K562 (cell line): ENCODE measurements at regions of chr12 and their contacts with region 1.

Region 1: GRCh38 chr12:110431957-110432587 is 18.1 kb downstream of the ARPC3 start:
- DNase-seq: no peak
- ATAC-seq: no peak
- H3K4me3 ChIP-seq: no peak overlapping the region
- H3K27ac ChIP-seq: peak overlapping the region; percentile 40; the same call in 1 of the 3 replicates
- H3K4me1 ChIP-seq: peaks cover 0 to 11% of the 10 kb centered on the region in 2 experiments; a peak in 2 of 5 replicates
- H3K27me3 ChIP-seq: no peaks in the 10 kb centered on the region
- CTCF ChIP-seq: no peak
- EP300 ChIP-seq: no peak
- POLR2A ChIP-seq: no peak
- RAD21 ChIP-seq: no peak

Region 2: DNA sequence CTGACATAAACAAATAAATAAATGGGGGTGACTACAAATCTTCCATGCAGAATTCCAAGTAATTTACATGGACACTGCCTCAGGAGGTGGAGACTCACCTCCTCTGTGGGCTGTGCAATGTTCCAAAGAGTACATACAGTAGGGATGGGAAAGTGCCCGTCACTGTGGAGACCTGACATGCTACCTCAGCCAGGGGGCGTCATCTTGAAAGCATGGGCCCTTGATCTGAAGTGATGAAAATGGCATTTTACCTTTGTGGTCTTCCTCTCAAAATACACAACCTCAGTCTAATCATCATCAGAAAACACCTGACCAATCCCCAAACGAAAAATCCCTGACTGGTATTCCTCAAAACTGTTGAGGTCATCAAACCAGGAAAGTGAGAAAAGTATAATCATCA is 77.0 kb before region 1 on chr12:
- CTCF ChIA-PET with region 1: interaction called, 7 read pairs
- POLR2A ChIA-PET with region 1: interaction called, 10 read pairs
- in situ Hi-C with region 1: no loop called
- intact Hi-C with region 1: loop called (anchors 1 kb)
- DNase-seq: peak; percentile 58 to 65 (median 61)
- ATAC-seq: peak; percentile 80
- H3K4me3 ChIP-seq: no peak overlapping the region
- H3K27ac ChIP-seq: no peak overlapping the region
- H3K4me1 ChIP-seq: peaks cover 8 to 21% of the 10 kb centered on the region in 2 experiments; a peak in 4 of 5 replicates
- H3K27me3 ChIP-seq: no peaks in the 10 kb centered on the region
- CTCF ChIP-seq: peak; percentile 61 to 71 (median 66)
- EP300 ChIP-seq: no peak
- POLR2A ChIP-seq: no peak
- RAD21 ChIP-seq: peak in 1 of 2 experiments; percentile 66; a peak in 3 of 4 replicates

Region 3: DNA sequence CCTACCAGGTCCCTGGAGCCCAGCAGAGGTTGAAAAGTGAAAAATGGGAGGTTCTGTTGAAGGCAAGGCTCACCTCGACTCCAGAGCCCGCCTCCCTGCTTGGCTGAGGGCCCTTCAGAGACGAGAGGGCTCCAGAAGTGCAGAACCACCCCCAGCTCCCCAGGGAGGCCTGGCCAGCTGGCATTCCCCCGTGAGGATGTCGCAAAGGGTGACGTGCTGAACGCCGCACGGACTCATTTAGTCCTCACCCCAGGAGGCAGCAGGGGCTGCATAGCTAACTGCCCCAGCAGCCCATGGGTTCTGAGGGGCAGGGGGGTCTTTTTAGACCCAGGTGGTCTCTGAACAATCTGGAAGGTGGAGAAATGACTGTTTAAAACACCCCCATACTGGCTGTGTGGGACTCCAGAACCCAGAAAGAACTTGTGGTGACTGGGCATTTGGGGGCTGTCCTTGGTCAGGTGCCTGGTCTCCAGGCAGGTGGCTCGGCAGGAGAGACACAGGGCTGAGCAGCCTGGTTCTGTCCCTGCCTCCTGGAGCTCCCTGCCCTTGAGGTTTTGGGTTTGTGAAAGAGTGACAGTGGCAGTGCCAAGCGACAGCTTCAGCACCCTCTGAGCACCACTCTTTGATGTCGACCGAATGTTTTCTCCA is 60.5 kb before region 1 on chr12:
- CTCF ChIA-PET with region 1: no interaction called
- POLR2A ChIA-PET with region 1: interaction called, 3 read pairs
- in situ Hi-C with region 1: loop called (anchors 5 kb)
- intact Hi-C with region 1: no loop called
- DNase-seq: no peak
- ATAC-seq: peak; percentile 14
- H3K4me3 ChIP-seq: no peak overlapping the region
- H3K27ac ChIP-seq: no peak overlapping the region
- H3K4me1 ChIP-seq: peaks cover 0 to 6% of the 10 kb centered on the region in 2 experiments; a peak in 2 of 5 replicates
- H3K27me3 ChIP-seq: no peaks in the 10 kb centered on the region
- CTCF ChIP-seq: no peak
- EP300 ChIP-seq: no peak
- POLR2A ChIP-seq: 0 out of 2 replicates have a peak, but pooled peaks have one; percentile 26
- RAD21 ChIP-seq: no peak